ENCODE measurements at regions of chr10 and their contacts with region 1.

Region 1: DNA sequence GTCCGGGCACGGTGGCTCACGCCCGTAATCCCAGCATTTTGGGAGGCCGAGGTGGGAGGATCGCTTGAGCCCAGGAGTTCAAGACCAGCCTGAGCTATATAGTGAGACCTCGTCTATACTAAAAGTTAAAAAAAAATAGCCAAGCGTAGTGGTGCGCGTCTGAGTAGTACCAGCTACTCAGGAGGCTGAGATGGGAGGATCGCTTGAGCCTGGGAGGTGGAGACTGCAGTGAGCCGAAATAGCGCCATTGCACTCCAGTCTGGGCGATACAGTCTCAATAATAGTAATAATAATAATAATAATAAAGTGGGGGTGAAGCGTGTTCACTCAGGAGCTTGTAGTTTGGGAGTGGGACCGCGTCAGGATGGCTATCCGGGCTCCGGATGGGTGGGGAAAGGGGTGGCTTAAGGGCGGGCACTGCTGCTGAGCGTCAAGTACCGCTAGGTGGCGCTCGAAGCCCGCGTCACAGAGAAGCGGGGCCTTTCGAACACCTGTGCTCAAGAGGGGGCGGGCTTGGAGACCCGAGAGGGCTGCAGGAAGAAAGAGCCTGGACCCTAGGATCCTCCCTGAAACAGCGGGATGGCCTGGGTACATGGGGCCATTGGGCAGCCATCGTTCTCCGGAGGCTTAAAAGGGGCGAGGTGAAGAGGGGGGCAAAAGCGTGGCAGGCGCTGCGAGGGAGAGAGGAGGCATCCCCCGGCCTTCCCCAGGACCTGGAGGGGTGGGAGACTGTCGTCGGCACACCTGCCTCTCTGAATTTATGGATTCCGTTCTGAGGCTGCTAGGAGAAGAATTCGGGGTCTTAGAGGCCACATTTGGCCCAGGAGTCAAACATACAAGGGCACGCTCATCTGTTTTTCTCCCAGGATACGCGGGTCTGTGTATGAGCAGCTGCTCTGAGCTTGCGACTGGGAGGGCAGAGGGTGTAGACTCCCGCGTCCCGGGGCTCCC is 14.5 kb downstream of the LBX1 start:
- DNase-seq: peak; percentile 68
- H3K4me3 Mint-ChIP-seq: peak overlapping the region; percentile 75
- H3K27ac Mint-ChIP-seq: no peak overlapping the region
- H3K4me1 Mint-ChIP-seq: peaks cover 4% of the 10 kb centered on the region
- H3K27me3 Mint-ChIP-seq: peaks cover 49% of the 10 kb centered on the region
- CTCF ChIP-seq: peak; percentile 95

Region 2: GRCh38 chr10:101176577-101176976 is 38.1 kb before region 1 on chr10:
- CTCF ChIA-PET with region 1: interaction called, 10 read pairs
- POLR2A ChIA-PET with region 1: no interaction called
- intact Hi-C with region 1: no loop called
- DNase-seq: no peak
- H3K4me3 Mint-ChIP-seq: no peak overlapping the region
- H3K27ac Mint-ChIP-seq: no peak overlapping the region
- H3K4me1 Mint-ChIP-seq: no peaks in the 10 kb centered on the region
- H3K27me3 Mint-ChIP-seq: peaks cover 58% of the 10 kb centered on the region
- CTCF ChIP-seq: no peak

Region 3: DNA sequence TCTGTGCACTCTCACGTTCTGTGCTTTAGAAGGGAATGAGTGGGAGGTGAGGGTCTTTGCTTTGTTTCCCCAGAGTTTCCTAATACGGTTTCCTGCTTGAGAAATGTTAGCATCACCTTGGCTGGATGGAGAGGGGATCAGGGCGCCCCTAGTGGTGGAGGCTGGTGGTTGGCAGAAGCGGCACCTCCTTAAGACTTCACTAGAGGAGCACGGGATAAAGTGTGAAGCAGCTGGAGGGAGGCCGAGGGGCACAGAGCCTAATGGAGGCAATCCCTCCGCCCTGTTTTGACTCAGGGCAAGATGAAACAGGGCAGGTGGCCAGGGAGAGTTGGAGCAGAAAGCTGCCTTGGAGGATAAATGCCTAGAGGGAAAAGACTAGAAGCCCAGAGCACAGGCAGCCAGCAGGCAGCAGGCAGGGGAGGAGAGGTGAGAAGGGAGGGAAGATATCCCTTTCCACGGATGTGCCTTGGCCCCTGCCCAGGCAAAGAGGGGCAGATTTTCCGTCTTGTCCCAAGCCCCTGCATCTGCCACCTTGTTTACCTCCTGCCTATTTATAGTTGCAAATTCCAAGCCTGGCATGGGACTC is 83.3 kb after region 1 on chr10:
- CTCF ChIA-PET with region 1: interaction called, 58 read pairs
- POLR2A ChIA-PET with region 1: no interaction called
- intact Hi-C with region 1: no loop called
- DNase-seq: peak; percentile 69
- H3K4me3 Mint-ChIP-seq: no peak overlapping the region
- H3K27ac Mint-ChIP-seq: no peak overlapping the region
- H3K4me1 Mint-ChIP-seq: peaks cover 10% of the 10 kb centered on the region
- H3K27me3 Mint-ChIP-seq: peaks cover 65% of the 10 kb centered on the region
- CTCF ChIP-seq: peak; percentile 72

Region 4: GRCh38 chr10:101446947-101447346 is 232.2 kb after region 1 on chr10:
- CTCF ChIA-PET with region 1: interaction called, 183 read pairs
- POLR2A ChIA-PET with region 1: interaction called, 6 read pairs
- intact Hi-C with region 1: loop called (anchors 1 kb)
- DNase-seq: no peak
- H3K4me3 Mint-ChIP-seq: no peak overlapping the region
- H3K27ac Mint-ChIP-seq: no peak overlapping the region
- H3K4me1 Mint-ChIP-seq: peaks cover 5% of the 10 kb centered on the region
- H3K27me3 Mint-ChIP-seq: no peaks in the 10 kb centered on the region
- CTCF ChIP-seq: no peak

Region 5: GRCh38 chr10:101558202-101558601 is 343.5 kb after region 1 on chr10:
- CTCF ChIA-PET with region 1: interaction called, 17 read pairs
- POLR2A ChIA-PET with region 1: no interaction called
- intact Hi-C with region 1: no loop called
- DNase-seq: peak; percentile 78
- H3K4me3 Mint-ChIP-seq: no peak overlapping the region
- H3K27ac Mint-ChIP-seq: peak overlapping the region; percentile 93
- H3K4me1 Mint-ChIP-seq: peaks cover 11% of the 10 kb centered on the region
- H3K27me3 Mint-ChIP-seq: no peaks in the 10 kb centered on the region
- CTCF ChIP-seq: no peak

Region 6: DNA sequence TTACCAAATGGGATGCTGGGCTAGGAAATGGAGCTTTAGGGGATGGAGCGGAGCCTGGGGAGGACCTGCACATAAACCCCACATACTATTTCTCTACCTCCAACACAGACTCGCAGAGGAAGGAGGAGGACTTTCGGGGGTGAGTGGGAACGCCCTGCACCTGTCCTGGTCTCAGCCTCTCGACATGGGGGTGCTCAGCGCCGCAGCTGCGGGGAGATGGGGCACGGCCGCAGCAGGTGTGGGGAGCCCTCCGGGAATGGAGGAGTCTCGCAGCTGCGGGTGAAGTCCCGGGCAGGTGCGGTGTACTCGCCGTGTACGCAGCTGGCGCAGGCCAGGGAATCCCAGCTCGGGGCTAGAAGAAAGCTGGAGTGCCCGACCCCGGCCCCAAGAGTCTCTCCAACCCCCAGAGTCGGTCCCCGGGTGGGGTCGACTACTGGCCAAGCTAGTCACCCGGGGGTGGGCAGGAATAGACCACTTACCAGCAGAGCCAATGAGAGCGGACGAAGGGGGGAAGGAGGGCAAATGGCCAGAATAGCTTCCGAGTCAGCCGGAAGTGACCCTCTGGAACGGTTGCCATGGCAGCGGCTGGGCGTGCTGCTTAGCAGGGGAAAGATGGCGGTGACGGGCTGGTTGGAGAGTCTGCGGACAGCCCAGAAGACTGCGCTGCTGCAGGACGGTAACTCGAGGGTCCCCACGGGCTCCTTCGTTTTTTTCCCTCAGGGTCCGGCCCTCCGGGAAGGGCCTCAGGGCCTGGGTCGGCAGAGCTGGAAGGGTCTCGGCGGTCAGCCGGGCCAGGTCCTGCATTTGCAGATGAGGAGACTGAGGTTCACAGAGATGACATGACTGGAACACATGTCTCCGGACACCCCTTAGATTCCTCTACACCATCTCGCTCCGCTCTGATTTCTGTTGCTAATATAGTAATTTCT is 373.3 kb after region 1 on chr10 and contains the starts of genes DPCD and POLL:
- CTCF ChIA-PET with region 1: interaction called, 21 read pairs
- POLR2A ChIA-PET with region 1: interaction called, 5 read pairs
- intact Hi-C with region 1: no loop called
- DNase-seq: peak; percentile 93
- H3K4me3 Mint-ChIP-seq: peak within 1 kb of the TSS; percentile 93
- H3K27ac Mint-ChIP-seq: peak within 1 kb of the TSS; percentile 87
- H3K4me1 Mint-ChIP-seq: peaks cover 17% of the 10 kb centered on the region
- H3K27me3 Mint-ChIP-seq: no peaks in the 10 kb centered on the region
- CTCF ChIP-seq: no peak
- total RNA-seq, gene DPCD: 24.2 and 25.7 TPM in 2 replicates
- total RNA-seq, gene POLL: 38.5 and 40.7 TPM in 2 replicates

Measured in MCF 10A (cell line).